Colonic mucosa (tissue), 4 donors: ENCODE measurements at regions of chr14 and their contacts with region 1.

Region 1: DNA sequence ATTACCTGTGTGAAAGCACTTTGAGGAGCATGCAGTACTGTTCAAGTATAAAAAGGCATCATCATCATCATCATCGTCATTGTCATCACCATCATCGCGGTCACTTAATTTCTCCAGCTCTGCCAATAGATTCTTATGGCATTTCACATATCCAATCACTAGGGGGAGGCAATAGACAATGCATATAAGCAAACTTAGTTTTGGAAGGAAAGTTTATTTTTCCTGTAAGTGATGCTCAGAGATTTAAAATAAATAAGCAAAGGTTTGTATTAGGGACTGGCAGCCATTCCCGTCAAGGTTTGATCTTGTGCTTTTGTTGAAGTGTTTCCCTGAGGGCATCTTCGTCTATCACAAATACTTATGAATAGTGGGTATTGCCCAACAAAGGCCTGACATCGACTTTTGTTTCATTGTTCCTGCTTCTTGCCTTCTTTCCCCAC is 127.4 kb downstream of the KTN1 start:
- DNase-seq: no peak
- H3K4me3 ChIP-seq: no peak overlapping the region
- H3K27ac ChIP-seq: no peak overlapping the region
- H3K4me1 ChIP-seq: no peaks in the 10 kb centered on the region
- H3K27me3 ChIP-seq: no peaks in the 10 kb centered on the region
- CTCF ChIP-seq: peak; percentile 68

Region 2: GRCh38 chr14:55645145-55645544 is 62.2 kb before region 1 on chr14:
- intact Hi-C with region 1: no loop called
- DNase-seq: no peak
- H3K4me3 ChIP-seq: no peak overlapping the region
- H3K27ac ChIP-seq: no peak overlapping the region
- H3K4me1 ChIP-seq: no peaks in the 10 kb centered on the region
- H3K27me3 ChIP-seq: no peaks in the 10 kb centered on the region
- CTCF ChIP-seq: no peak

Region 3: GRCh38 chr14:55889124-55889523 is 181.7 kb after region 1 on chr14:
- intact Hi-C with region 1: no loop called
- DNase-seq: no peak
- H3K4me3 ChIP-seq: no peak overlapping the region
- H3K27ac ChIP-seq: no peak overlapping the region
- H3K4me1 ChIP-seq: no peaks in the 10 kb centered on the region
- H3K27me3 ChIP-seq: no peaks in the 10 kb centered on the region
- CTCF ChIP-seq: no peak

Region 4: GRCh38 chr14:56339855-56340701 is 632.7 kb after region 1 on chr14:
- intact Hi-C with region 1: loop called (anchors 5 kb)
- DNase-seq: peak; percentile 65
- H3K4me3 ChIP-seq: no peak overlapping the region
- H3K27ac ChIP-seq: no peak overlapping the region
- H3K4me1 ChIP-seq: no peaks in the 10 kb centered on the region
- H3K27me3 ChIP-seq: no peaks in the 10 kb centered on the region
- CTCF ChIP-seq: peak; percentile 76

Region 5: GRCh38 chr14:56474419-56475022 is 767.1 kb after region 1 on chr14:
- intact Hi-C with region 1: loop called (anchors 5 kb)
- DNase-seq: no peak
- H3K4me3 ChIP-seq: no peak overlapping the region
- H3K27ac ChIP-seq: no peak overlapping the region
- H3K4me1 ChIP-seq: no peaks in the 10 kb centered on the region
- H3K27me3 ChIP-seq: no peaks in the 10 kb centered on the region
- CTCF ChIP-seq: peak; percentile 63